ENCODE measurements at regions of chr12 and their contacts with region 1.

Region 1: GRCh38 chr12:50589650-50590435 is 85.1 kb downstream of the DIP2B start:
- DNase-seq: no peak
- ATAC-seq: no peak
- H3K4me3 Mint-ChIP-seq: no peak overlapping the region
- H3K27ac Mint-ChIP-seq: peak overlapping the region; percentile 30
- H3K4me1 Mint-ChIP-seq: peaks cover 27% of the 10 kb centered on the region
- H3K27me3 Mint-ChIP-seq: no peaks in the 10 kb centered on the region
- CTCF ChIP-seq: no peak

Region 2: GRCh38 chr12:50458606-50459005 is 131.2 kb before region 1 on chr12:
- CTCF ChIA-PET with region 1: no interaction called
- POLR2A ChIA-PET with region 1: interaction called, 11 read pairs
- intact Hi-C with region 1: no loop called
- DNase-seq: no peak
- ATAC-seq: no peak
- H3K4me3 Mint-ChIP-seq: no peak overlapping the region
- H3K27ac Mint-ChIP-seq: no peak overlapping the region
- H3K4me1 Mint-ChIP-seq: no peaks in the 10 kb centered on the region
- H3K27me3 Mint-ChIP-seq: no peaks in the 10 kb centered on the region
- CTCF ChIP-seq: no peak

Region 3: GRCh38 chr12:50517456-50518048 is 72.3 kb before region 1 on chr12:
- CTCF ChIA-PET with region 1: no interaction called
- POLR2A ChIA-PET with region 1: interaction called, 10 read pairs
- intact Hi-C with region 1: no loop called
- DNase-seq: no peak
- ATAC-seq: peak; percentile 75
- H3K4me3 Mint-ChIP-seq: no peak overlapping the region
- H3K27ac Mint-ChIP-seq: no peak overlapping the region
- H3K4me1 Mint-ChIP-seq: peaks cover 44% of the 10 kb centered on the region
- H3K27me3 Mint-ChIP-seq: no peaks in the 10 kb centered on the region
- CTCF ChIP-seq: no peak

Region 4: DNA sequence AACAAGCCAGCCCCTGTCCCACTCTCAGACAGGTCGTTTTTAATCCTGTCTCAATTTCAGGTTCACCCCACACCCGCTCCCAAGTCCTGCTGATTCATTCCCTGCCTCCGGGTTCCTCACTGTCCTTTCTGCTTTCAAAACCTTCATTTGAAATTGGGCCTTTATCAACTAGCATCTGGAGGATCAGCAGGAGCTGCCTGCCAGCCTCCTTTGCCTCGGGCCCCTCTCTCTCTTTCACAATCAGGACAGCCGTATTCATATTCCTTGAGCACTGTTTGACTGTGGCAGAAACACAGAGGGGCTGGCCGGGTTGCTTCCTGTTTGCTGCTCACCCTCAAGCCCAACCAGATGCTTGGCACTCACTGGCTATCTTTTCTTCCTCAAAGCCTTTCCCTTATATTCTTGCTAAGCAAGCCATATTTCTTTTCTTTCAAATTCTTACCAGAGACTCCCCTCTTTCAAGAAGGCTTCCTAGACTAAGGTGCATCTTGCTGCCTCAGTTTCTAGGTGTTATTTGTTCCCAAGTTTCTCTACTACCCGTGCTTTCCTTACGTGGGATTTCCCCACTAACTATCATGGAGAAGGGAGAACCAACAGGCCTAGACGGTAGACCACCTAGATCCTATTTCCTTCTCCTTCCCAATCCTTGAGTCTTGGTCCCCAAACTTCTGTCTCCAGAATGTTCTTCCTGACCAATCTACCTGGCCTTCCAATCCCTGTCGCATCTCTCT is 798.4 kb after region 1 on chr12:
- CTCF ChIA-PET with region 1: no interaction called
- POLR2A ChIA-PET with region 1: no interaction called
- intact Hi-C with region 1: no loop called
- DNase-seq: no peak
- ATAC-seq: no peak
- H3K4me3 Mint-ChIP-seq: no peak overlapping the region
- H3K27ac Mint-ChIP-seq: no peak overlapping the region
- H3K4me1 Mint-ChIP-seq: peaks cover 60% of the 10 kb centered on the region
- H3K27me3 Mint-ChIP-seq: no peaks in the 10 kb centered on the region
- CTCF ChIP-seq: no peak